ENCODE measurements at regions of chr10 and their contacts with region 1.

Region 1: DNA sequence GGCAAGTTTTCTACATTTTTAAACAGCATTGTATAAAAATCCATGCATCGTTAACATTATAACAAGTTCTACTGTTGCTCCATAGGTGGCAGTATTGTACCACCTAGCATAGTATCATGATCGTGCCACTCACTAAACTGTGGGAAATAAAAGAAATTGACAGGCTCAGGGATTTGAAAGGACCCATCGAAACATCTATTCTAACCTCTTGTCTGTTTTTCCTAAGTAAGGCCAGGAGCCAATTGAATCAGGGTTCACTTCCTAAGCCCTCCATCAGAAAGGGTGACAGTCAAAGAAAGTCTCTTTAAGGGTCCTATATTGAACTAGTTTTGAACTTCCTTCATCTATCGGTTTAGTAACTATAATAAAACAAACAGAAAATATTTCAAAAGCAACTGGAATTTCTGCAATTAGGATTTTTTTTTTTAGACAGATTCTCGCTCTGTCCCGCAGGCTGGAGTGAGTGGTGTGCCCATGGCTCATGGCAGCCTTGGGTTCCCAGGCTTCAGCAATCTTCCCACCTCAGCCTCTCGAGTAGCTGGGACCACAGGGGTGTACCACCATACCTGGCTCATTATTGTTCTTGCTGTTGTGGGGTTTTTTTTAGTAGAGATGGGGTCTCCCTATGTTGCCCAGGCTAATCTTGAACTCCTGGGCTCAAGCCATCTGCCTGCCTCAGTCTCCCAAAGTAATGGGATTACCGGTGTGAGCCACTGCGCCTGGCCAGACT is 9.4 kb downstream of the HACD1 start:
- DNase-seq: no peak
- ATAC-seq: peak; percentile 90
- H3K4me3 ChIP-seq: no peak overlapping the region
- H3K27ac ChIP-seq: peak overlapping the region; percentile 46; the same call in 1 of the 2 replicates
- H3K4me1 ChIP-seq: peaks cover 5% of the 10 kb centered on the region; the same call in 1 of the 2 replicates
- H3K27me3 ChIP-seq: no peaks in the 10 kb centered on the region
- CTCF ChIP-seq: peak; percentile 77

Region 2: DNA sequence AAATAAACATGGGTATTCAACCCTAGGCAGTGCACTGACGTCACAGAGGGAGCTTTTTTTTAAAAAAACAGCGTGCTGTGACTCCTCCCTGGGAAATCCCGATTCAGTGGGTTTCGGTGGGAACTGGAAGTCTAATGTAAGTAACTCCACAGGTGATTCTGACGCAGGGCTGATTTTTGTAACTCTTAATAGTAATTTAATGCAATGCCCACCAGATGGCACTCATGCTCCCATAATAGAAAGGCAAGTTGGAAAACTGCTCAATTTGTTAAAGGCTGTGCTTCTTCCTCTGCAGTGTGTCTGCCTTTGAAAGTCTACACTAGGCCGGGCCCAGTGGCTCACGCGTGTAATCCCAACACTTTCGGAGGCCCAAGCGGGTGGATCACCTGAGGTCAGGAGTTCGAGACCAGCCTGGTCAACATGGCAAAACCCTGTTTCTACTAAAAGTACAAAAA is 779.6 kb before region 1 on chr10:
- CTCF ChIA-PET with region 1: no interaction called
- POLR2A ChIA-PET with region 1: no interaction called
- in situ Hi-C with region 1: no loop called
- intact Hi-C with region 1: loop called (anchors 10 kb)
- DNase-seq: peak; percentile 55
- ATAC-seq: peak; percentile 87
- H3K4me3 ChIP-seq: peak overlapping the region; percentile 1 to 23; a peak in 3 of 4 replicates
- H3K27ac ChIP-seq: peak overlapping the region; percentile 72
- H3K4me1 ChIP-seq: peaks cover 15% of the 10 kb centered on the region
- H3K27me3 ChIP-seq: no peaks in the 10 kb centered on the region
- CTCF ChIP-seq: peak; percentile 66

Region 3: DNA sequence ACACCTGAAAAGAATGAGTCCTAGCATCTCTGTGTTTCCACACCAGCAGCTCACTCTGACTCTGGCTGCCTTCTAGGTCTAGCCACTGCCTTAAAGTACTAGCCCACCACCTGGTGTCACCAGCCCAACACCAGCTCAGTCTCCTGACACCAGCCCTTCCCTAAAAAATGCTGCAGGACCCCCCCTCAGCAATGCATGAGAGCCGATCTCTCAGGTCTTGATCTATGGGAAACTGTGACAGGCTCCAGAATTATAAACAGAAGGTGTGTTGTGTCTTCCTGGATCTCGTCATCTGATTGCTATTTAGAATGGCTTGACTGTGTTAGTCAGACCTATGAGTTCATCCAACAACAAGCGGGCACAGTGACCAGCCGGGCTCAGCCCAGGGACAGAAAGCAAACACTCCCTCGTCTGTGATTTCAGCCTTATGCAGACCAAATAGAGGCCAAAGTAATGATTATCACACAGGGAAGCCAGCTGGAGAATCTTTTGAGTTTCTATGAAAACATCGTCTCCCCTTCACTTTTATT is 544.7 kb before region 1 on chr10:
- CTCF ChIA-PET with region 1: no interaction called
- POLR2A ChIA-PET with region 1: no interaction called
- in situ Hi-C with region 1: no loop called
- intact Hi-C with region 1: no loop called
- DNase-seq: peak; percentile 93
- ATAC-seq: peak; percentile 93
- H3K4me3 ChIP-seq: peak overlapping the region in 1 of 2 experiments; percentile 32; a peak in 2 of 4 replicates
- H3K27ac ChIP-seq: peak overlapping the region; percentile 97
- H3K4me1 ChIP-seq: peaks cover 60% of the 10 kb centered on the region
- H3K27me3 ChIP-seq: no peaks in the 10 kb centered on the region
- CTCF ChIP-seq: peak; percentile 11; the same call in 1 of the 2 replicates

Region 4: DNA sequence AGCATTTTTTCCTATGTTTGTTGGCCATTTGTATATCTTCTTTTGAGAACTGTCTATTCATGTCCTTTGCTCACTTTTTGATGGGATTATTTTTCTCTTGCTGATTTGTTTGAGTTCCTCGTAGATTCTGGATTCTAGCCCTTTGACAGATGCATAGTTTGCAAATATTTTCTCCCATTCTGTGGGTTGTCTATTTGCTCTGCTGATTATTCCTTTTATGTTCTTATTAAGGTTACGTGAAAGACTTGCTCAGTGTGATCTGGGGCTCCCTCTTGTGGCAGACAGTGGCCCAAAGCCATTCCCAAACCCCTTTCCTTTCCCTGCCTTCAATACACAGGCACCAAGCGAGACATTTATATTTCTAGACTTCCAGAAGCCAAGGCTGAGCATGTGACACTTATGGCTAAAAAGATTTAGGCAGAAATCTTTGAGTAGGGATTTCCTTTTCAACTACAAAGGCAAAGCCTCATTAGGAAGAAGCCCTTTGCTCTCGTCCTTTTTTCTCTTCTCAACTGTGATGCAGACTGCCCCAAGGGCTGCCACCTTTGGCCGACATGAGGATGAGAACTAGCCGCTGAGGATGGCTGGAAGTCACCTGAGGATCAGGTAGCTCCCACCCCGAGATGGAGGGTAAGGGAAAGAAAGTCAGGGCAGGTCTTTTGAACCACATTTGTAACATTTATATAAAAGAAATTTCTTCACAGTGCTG is 177.0 kb before region 1 on chr10:
- CTCF ChIA-PET with region 1: no interaction called
- POLR2A ChIA-PET with region 1: no interaction called
- in situ Hi-C with region 1: no loop called
- intact Hi-C with region 1: no loop called
- DNase-seq: peak; percentile 71
- ATAC-seq: peak; percentile 91
- H3K4me3 ChIP-seq: no peak overlapping the region
- H3K27ac ChIP-seq: peak overlapping the region; percentile 69; the same call in 1 of the 2 replicates
- H3K4me1 ChIP-seq: no peaks in the 10 kb centered on the region; the same call in 1 of the 2 replicates
- H3K27me3 ChIP-seq: no peaks in the 10 kb centered on the region
- CTCF ChIP-seq: peak; percentile 91

Region 5: DNA sequence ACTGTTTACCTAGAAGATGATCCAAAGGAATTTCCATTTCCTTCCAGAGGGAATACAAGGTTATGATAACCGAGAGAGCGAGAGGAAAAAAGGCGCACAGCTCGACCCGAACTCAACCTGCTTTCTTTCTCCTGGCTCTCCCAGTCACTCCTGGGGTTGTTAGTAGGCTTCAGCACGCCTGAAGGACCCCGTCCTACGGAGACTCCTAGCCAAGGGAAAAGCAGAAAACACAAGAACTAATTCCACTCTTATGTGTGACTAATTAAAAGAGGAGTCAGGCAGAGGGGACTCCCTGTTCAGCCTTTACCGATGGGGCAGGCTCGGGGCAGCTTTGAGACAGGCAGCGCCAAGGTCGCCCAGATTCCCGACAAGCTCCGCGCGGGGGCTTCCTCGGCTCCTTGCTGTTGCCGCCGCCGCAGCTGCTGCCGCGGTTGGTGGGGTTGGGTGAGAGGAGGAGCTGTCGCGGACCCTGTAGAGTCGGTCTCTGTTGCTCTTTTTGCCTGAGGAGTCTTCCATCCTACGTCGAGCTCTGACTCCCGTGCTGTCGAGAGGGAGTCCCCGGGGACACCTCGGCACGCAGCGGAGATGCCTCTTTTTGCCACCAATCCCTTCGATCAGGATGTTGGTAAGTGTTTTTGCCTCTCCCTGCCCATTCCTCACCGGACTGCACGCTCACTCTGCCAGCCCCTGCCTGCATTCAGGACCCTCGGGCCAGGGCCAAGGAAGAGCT is 36.2 kb after region 1 on chr10 and contains the start of gene STAM:
- CTCF ChIA-PET with region 1: no interaction called
- POLR2A ChIA-PET with region 1: no interaction called
- in situ Hi-C with region 1: no loop called
- intact Hi-C with region 1: no loop called
- DNase-seq: peak; percentile 86
- ATAC-seq: peak; percentile 93
- H3K4me3 ChIP-seq: peak within 1 kb of the TSS; percentile 98 to 99
- H3K27ac ChIP-seq: peak within 1 kb of the TSS; percentile 98
- H3K4me1 ChIP-seq: peaks cover 8% of the 10 kb centered on the region; the same call in 1 of the 2 replicates
- H3K27me3 ChIP-seq: no peaks in the 10 kb centered on the region
- CTCF ChIP-seq: no peak
- total RNA-seq, gene STAM: 18.9 TPM

Region 6: DNA sequence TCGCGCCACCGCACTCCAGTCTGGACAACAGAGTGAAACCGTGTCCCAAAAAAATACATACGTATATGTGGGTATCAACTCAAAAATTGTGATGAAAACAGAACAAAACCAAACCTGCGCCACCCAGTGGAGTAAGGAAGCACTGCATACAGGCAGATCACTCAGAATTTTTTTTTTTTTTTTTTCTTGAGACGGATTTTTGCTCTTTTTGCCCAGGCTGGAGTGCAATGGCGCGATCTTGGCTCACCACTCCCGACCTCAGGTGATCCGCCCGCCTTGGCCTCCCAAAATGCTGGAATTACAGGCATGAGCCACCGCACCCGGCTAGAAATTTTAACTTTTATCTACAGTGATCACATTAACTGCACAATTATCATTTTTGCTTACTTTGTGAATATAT is 135.2 kb after region 1 on chr10:
- CTCF ChIA-PET with region 1: no interaction called
- POLR2A ChIA-PET with region 1: no interaction called
- in situ Hi-C with region 1: no loop called
- intact Hi-C with region 1: loop called (anchors 5 kb)
- DNase-seq: no peak
- ATAC-seq: peak; percentile 26; the same call in 1 of the 2 replicates
- H3K4me3 ChIP-seq: peak overlapping the region in 1 of 2 experiments; percentile 38; a peak in 2 of 4 replicates
- H3K27ac ChIP-seq: no peak overlapping the region; the same call in 1 of the 2 replicates
- H3K4me1 ChIP-seq: peaks cover 2% of the 10 kb centered on the region; the same call in 1 of the 2 replicates
- H3K27me3 ChIP-seq: no peaks in the 10 kb centered on the region
- CTCF ChIP-seq: peak; percentile 88

Region 7: GRCh38 chr10:17872191-17873091 is 264.7 kb after region 1 on chr10:
- CTCF ChIA-PET with region 1: no interaction called
- POLR2A ChIA-PET with region 1: no interaction called
- in situ Hi-C with region 1: no loop called
- intact Hi-C with region 1: loop called (anchors 5 kb)
- DNase-seq: peak; percentile 24
- ATAC-seq: no peak
- H3K4me3 ChIP-seq: no peak overlapping the region
- H3K27ac ChIP-seq: no peak overlapping the region
- H3K4me1 ChIP-seq: no peaks in the 10 kb centered on the region
- H3K27me3 ChIP-seq: no peaks in the 10 kb centered on the region
- CTCF ChIP-seq: peak; percentile 61

Measured in Panc1 (cell line).